ENCODE measurements at regions of chr14 and their contacts with region 1.

Region 1: GRCh38 chr14:96741151-96741977 is 55.8 kb upstream of the VRK1 start:
- DNase-seq: peak; percentile 33 to 84 (median 57)
- H3K4me3 ChIP-seq: peak overlapping the region; percentile 22 to 74 (median 56)
- H3K27ac ChIP-seq: peak overlapping the region in 2 of 59 donors; percentile 22 to 30
- H3K27me3 ChIP-seq: peaks cover 0 to 62% (median 31%) of the 10 kb centered on the region in 45 donors
- CTCF ChIP-seq: peak; percentile 63 to 95 (median 88)

Region 2: GRCh38 chr14:96297000-96297399 is 444.4 kb before region 1 on chr14:
- intact Hi-C with region 1: loop called in 1 of 2 experiments (anchors 10 kb)
- DNase-seq: no peak
- H3K4me3 ChIP-seq: no peak overlapping the region
- H3K27ac ChIP-seq: no peak overlapping the region
- H3K27me3 ChIP-seq: no peaks in the 10 kb centered on the region
- CTCF ChIP-seq: peak; percentile 51 to 85 (median 67)

Region 3: GRCh38 chr14:96445844-96446710 is 295.3 kb before region 1 on chr14:
- intact Hi-C with region 1: no loop called
- DNase-seq: no peak
- H3K4me3 ChIP-seq: no peak overlapping the region
- H3K27ac ChIP-seq: no peak overlapping the region
- H3K27me3 ChIP-seq: no peaks in the 10 kb centered on the region
- CTCF ChIP-seq: no peak

Region 4: DNA sequence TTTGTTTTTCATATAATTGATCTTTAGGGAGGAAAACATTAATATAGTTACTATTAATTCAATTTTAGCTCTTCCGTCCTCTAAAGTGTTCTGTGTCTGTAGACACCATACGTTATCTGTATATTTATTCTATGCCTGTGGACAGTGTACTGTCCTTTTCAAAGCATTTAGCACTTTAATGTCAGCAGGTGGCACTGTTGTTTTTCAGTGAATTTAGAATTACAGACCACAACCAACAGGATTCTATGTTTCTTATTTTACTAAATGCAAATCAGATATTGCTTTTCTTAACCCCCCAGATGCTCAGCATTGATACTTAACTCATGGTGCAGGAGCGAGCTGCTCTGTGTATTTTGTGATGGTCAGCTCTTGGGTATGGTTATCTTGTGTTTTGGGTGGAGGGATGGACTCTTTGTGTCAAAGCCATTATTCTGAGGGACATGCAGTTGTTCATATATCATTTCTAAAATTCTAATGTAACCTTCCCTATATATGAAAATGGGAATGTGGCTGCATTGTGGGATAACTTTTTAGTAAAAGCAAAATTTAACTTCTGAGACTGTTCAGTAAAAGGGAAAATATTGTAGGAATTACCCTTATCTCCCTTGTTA is 174.0 kb before region 1 on chr14:
- intact Hi-C with region 1: loop called (anchors 2 to 5 kb)
- DNase-seq: no peak
- H3K4me3 ChIP-seq: no peak overlapping the region
- H3K27ac ChIP-seq: no peak overlapping the region
- H3K27me3 ChIP-seq: no peaks in the 10 kb centered on the region
- CTCF ChIP-seq: peak; percentile 49 to 85 (median 69)

Region 5: GRCh38 chr14:96648506-96649326 is 92.6 kb before region 1 on chr14:
- intact Hi-C with region 1: no loop called
- DNase-seq: no peak
- H3K4me3 ChIP-seq: no peak overlapping the region
- H3K27ac ChIP-seq: no peak overlapping the region
- H3K27me3 ChIP-seq: peaks cover 0 to 3% (median 0%) of the 10 kb centered on the region in 45 donors
- CTCF ChIP-seq: no peak

Region 6: GRCh38 chr14:96811985-96812667 is 70.8 kb after region 1 on chr14:
- intact Hi-C with region 1: no loop called
- DNase-seq: no peak
- H3K4me3 ChIP-seq: no peak overlapping the region
- H3K27ac ChIP-seq: no peak overlapping the region
- H3K27me3 ChIP-seq: no peaks in the 10 kb centered on the region
- CTCF ChIP-seq: no peak

Measured in dorsolateral prefrontal cortex (tissue), 120 donors.